Lower leg skin (tissue), 4 donors: ENCODE measurements at regions of chr6 and their contacts with region 1.

Region 1: DNA sequence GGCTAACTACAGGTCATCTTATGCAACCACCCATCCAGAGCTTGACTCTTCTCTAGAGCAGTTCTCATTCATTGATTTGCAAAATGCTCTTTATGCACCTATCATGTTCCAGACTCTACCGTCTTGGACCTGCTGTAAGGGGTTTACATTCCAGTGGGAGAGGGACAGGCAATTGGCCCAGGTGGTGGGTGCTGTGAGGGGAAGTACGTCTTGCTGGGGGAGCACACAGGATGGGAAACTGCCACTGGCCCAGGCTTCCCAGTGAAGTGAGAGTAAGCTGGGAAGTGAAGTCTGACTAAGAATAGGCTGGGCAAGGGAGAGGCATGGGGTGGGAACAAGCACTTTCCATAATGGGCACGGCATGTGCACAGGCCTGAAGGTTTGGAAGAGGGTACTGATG is 13.8 kb downstream of the OLIG3 start:
- DNase-seq: no peak
- H3K4me3 ChIP-seq: no peak overlapping the region
- CTCF ChIP-seq: no peak
- POLR2A ChIP-seq: no peak

Region 2: DNA sequence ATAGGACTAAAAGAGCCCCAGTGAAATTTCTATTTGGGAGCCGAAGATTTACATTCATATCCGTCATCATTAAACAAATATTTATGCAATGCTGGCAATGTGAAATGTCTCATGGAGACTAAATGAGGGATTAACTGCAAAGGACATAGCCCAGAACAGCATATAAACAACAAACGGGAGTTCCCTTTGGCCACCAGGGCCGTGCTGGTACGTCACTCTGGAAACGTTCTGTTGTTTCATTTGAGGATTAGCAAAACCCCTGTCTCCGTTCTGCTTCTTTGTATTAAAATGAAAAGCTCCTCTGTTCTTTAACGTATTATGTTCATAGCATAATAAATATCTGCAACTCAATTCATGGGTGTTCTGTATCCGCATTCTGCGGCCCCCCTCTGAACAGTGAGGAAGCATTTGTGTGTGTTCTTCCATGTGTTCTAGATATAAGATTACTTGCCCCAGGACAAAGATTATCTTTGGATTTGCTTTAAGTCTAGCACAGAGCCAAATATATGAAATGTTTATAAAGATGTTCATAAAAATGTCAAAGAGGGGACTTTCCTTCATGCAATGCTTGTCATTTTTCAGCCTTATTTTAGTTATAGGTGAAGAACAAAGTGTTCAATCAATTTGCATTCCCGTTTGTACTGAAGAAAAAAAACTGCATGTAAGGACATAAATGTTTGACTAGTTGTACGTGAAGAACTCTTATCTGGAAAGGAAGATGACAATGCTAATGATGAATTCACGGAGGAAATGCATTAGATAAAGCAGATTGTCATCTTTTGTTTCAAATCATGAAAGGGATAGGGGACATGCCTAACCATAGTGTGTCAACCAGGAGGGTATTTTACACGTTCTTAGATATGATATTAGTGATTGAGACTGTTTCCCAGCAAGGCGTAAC is 296.6 kb after region 1 on chr6:
- intact Hi-C with region 1: loop called (anchors 5 kb)
- DNase-seq: no peak
- H3K4me3 ChIP-seq: no peak overlapping the region
- CTCF ChIP-seq: no peak
- POLR2A ChIP-seq: no peak

Region 3: DNA sequence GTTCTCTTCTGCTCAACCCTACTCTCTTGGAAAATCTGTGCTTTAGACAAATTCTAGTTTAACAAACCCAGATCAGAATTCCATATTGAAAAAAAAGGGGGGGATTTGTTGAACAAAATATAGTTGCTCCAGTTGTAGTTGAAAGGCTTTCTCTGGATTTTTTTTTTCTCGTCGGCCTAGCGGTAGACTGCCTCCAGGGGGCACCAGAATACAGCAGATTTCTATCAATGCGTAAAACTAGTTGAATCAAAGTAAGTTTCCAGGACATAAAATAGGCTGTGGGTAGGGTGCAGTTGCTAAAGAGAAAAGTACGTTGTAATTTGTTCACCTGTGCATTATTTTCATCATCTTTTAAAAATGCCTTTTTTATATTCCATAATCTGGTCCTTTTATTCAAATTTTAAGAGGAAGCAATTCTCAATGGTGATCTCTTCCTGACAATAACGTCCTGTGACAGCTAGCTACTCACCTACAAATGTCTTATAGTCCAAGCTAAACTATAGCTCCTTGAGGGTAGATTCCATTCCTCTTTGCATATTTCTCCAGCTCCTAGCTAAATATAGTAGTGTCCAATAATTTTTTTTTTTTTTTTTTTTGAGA is 521.4 kb after region 1 on chr6:
- intact Hi-C with region 1: no loop called
- DNase-seq: peak; percentile 66 to 92
- H3K4me3 ChIP-seq: no peak overlapping the region
- CTCF ChIP-seq: peak in 1 of 3 donors; percentile 58
- POLR2A ChIP-seq: no peak